Heart left ventricle (tissue), 16 donors: ENCODE measurements at regions of chr13 and their contacts with region 1.

Region 1: GRCh38 chr13:28666897-28667488 is 8.1 kb downstream of the POMP start:
- DNase-seq: no peak
- ATAC-seq: no peak
- H3K4me3 ChIP-seq: no peak overlapping the region
- H3K27ac ChIP-seq: no peak overlapping the region
- H3K4me1 ChIP-seq: peaks cover 0 to 31% (median 5%) of the 10 kb centered on the region in 12 donors
- H3K27me3 ChIP-seq: no peaks in the 10 kb centered on the region
- CTCF ChIP-seq: no peak
- POLR2A ChIP-seq: no peak

Region 2: DNA sequence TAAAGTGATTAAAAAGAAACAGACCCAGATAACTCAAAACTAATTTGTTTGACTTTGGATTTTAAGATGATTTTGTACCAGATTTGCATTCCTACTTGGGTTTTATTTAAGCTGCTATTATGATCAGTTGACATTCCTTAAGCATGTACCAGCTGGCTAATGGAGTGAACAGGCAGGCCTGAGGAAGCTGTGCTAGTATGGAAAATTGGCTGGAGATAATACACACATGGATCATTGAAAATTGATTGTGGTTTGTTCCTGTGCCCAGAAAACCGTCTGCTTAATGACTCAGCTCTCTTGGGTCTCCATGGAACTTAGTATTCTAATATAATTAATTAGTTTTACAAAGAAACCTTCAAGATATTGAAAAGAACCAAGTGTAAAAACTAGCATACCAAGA is 1022.7 kb before region 1 on chr13:
- intact Hi-C with region 1: loop called in 1 of 10 experiments (anchors 10 kb)
- DNase-seq: no peak
- ATAC-seq: peak in 2 of 4 donors; percentile 42 to 47
- H3K4me3 ChIP-seq: no peak overlapping the region
- H3K27ac ChIP-seq: peak overlapping the region in 1 of 12 donors; percentile 50
- H3K4me1 ChIP-seq: peaks cover 0 to 28% (median 12%) of the 10 kb centered on the region in 12 donors
- H3K27me3 ChIP-seq: no peaks in the 10 kb centered on the region
- CTCF ChIP-seq: no peak
- POLR2A ChIP-seq: no peak

Region 3: GRCh38 chr13:28704919-28705318 is 37.9 kb after region 1 on chr13:
- intact Hi-C with region 1: loop called in 2 of 10 experiments (anchors 5 to 10 kb)
- DNase-seq: no peak
- ATAC-seq: no peak
- H3K4me3 ChIP-seq: no peak overlapping the region
- H3K27ac ChIP-seq: peak overlapping the region in 1 of 12 donors; percentile 78
- H3K4me1 ChIP-seq: peaks cover 0 to 37% (median 0%) of the 10 kb centered on the region in 12 donors
- H3K27me3 ChIP-seq: no peaks in the 10 kb centered on the region
- CTCF ChIP-seq: no peak
- POLR2A ChIP-seq: no peak

Region 4: GRCh38 chr13:28854657-28855056 is 187.7 kb after region 1 on chr13:
- intact Hi-C with region 1: no loop called
- DNase-seq: no peak
- ATAC-seq: no peak
- H3K4me3 ChIP-seq: no peak overlapping the region
- H3K27ac ChIP-seq: no peak overlapping the region
- H3K4me1 ChIP-seq: no peaks in the 10 kb centered on the region
- H3K27me3 ChIP-seq: no peaks in the 10 kb centered on the region
- CTCF ChIP-seq: no peak
- POLR2A ChIP-seq: no peak